Adrenal gland (tissue), 19 donors: ENCODE measurements at regions of chr11 and their contacts with region 1.

Region 1: DNA sequence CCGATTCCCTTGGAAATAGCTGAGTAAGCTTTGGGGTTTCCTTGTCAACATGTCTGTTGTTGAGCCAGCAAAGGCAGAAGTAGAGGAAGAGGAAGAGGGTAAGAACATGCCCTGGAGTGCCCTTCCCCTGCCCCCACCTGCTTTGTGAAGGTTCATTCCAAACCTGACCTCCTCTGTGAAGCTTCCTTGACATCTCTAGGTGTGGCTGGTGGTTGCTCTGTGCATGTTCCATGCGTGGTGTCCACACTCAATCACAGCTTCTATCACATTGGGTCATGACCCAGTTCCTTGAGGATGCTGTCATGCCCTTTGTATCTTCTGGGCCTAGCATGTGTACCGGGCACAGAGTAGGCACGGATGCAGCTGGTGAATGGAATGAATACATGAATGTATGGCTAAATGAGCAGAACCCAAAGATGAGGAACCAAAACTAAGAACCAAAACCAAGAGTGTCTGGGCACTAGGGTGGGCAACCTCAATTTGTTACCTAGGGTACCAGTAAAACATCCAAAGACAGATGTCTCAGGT is 23.7 kb upstream of the FXYD6 start:
- DNase-seq: no peak
- H3K4me3 ChIP-seq: no peak overlapping the region
- H3K27ac ChIP-seq: no peak overlapping the region
- H3K4me1 ChIP-seq: no peaks in the 10 kb centered on the region
- H3K27me3 ChIP-seq: no peaks in the 10 kb centered on the region
- CTCF ChIP-seq: no peak
- POLR2A ChIP-seq: no peak

Region 2: GRCh38 chr11:117849781-117850414 is 50.3 kb before region 1 on chr11:
- intact Hi-C with region 1: loop called in 1 of 2 experiments (anchors 5 kb)
- DNase-seq: peak in 2 of 7 donors; percentile 21 to 42
- H3K4me3 ChIP-seq: no peak overlapping the region
- H3K27ac ChIP-seq: peak overlapping the region in 1 of 5 donors; percentile 33
- H3K4me1 ChIP-seq: peaks cover 0 to 12% of the 10 kb centered on the region in 2 donors
- H3K27me3 ChIP-seq: no peaks in the 10 kb centered on the region
- CTCF ChIP-seq: no peak
- POLR2A ChIP-seq: no peak